ENCODE measurements at regions of chr15 and their contacts with region 1.

Region 1: GRCh38 chr15:70466895-70467529 is 296.3 kb downstream of the UACA start:
- DNase-seq: peak; percentile 76
- H3K4me3 Mint-ChIP-seq: no peak overlapping the region
- H3K27ac Mint-ChIP-seq: no peak overlapping the region
- H3K4me1 Mint-ChIP-seq: peaks cover 4% of the 10 kb centered on the region
- H3K27me3 Mint-ChIP-seq: peaks cover 98% of the 10 kb centered on the region

Region 2: GRCh38 chr15:69475769-69476358 is 991.1 kb before region 1 on chr15:
- CTCF ChIA-PET with region 1: interaction called, 28 read pairs
- DNase-seq: peak; percentile 81
- H3K4me3 Mint-ChIP-seq: no peak overlapping the region
- H3K27ac Mint-ChIP-seq: no peak overlapping the region
- H3K4me1 Mint-ChIP-seq: peaks cover 2% of the 10 kb centered on the region
- H3K27me3 Mint-ChIP-seq: peaks cover 44% of the 10 kb centered on the region

Region 3: DNA sequence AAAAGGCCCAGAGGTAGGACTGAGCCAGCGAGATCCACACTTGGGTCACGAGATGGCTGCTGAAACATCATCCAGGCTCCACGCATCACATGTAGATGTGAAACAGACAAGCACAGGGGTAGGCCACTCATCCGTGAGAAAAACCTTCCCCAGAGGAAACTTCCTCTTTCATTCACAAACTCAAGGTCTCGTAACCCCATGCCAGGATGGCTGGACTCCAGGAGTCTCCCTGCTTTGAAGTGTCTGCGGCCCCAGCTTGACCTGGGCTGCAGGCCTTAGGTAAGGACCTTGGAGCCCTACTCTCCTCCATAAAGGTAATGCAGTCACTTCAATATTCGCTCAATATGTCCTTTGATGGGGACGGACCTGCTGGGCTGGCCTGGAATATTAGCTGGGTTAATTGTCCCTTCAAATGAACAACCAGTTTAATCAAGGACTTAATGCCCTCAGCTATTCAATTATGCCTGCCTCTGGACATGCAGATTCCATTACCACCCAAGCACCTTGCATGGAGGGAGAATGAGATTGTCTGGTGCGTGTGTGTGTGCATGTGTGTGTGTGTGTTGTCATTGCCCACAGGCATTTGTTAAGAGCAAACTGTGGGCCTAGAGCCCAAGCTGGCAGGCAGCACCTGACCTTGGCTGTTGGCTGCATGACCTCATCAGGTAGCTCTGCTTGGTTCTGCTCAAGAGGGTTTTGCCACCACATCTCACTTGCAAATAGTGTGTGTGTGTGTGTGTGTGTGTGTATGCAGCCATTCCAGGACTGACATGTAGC is 182.4 kb before region 1 on chr15:
- CTCF ChIA-PET with region 1: no interaction called
- DNase-seq: no peak
- H3K4me3 Mint-ChIP-seq: no peak overlapping the region
- H3K27ac Mint-ChIP-seq: no peak overlapping the region
- H3K4me1 Mint-ChIP-seq: peaks cover 18% of the 10 kb centered on the region
- H3K27me3 Mint-ChIP-seq: peaks cover 5% of the 10 kb centered on the region

Region 4: GRCh38 chr15:70451821-70452653 is 15.0 kb before region 1 on chr15:
- CTCF ChIA-PET with region 1: interaction called, 13 read pairs
- DNase-seq: peak; percentile 80
- H3K4me3 Mint-ChIP-seq: no peak overlapping the region
- H3K27ac Mint-ChIP-seq: peak overlapping the region; percentile 70
- H3K4me1 Mint-ChIP-seq: peaks cover 66% of the 10 kb centered on the region
- H3K27me3 Mint-ChIP-seq: peaks cover 48% of the 10 kb centered on the region

Region 5: GRCh38 chr15:70488002-70488605 is 21.1 kb after region 1 on chr15:
- CTCF ChIA-PET with region 1: interaction called, 96 read pairs
- DNase-seq: peak; percentile 82
- H3K4me3 Mint-ChIP-seq: no peak overlapping the region
- H3K27ac Mint-ChIP-seq: no peak overlapping the region
- H3K4me1 Mint-ChIP-seq: peaks cover 45% of the 10 kb centered on the region
- H3K27me3 Mint-ChIP-seq: peaks cover 90% of the 10 kb centered on the region

Region 6: DNA sequence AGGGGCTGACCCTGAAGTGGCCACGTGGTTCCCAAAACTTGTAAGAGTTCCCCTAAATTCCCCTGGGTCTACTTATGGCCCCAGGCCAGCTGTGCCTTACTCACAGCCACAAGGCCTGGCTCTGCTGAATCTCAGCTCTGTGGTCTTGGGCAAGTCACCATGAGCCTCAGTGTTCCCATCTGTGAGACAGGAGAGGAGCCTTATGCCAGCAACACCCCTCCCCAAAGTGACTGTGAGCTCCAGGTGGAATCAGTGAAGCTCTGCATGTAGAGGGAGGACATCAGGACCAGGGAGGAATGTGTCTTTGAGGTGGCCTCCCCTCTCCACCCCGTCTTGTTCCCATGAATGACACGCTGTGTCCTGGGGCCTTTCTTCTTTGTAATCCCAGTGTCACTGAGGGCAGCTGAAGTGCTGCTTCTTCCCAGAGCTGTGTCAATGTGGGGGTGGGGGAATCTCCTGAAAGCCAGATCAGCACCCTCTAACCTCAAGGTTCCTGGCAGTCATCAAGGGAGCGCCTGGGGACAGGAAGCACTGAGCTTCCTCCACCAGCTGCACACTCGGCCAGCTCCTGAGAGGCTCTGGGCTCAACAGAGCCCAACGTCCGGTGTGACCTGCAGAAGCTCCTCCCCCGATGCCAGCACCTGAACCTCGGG is 37.4 kb after region 1 on chr15:
- CTCF ChIA-PET with region 1: interaction called, 28 read pairs
- DNase-seq: peak; percentile 43
- H3K4me3 Mint-ChIP-seq: no peak overlapping the region
- H3K27ac Mint-ChIP-seq: no peak overlapping the region
- H3K4me1 Mint-ChIP-seq: peaks cover 65% of the 10 kb centered on the region
- H3K27me3 Mint-ChIP-seq: peaks cover 68% of the 10 kb centered on the region

Region 7: DNA sequence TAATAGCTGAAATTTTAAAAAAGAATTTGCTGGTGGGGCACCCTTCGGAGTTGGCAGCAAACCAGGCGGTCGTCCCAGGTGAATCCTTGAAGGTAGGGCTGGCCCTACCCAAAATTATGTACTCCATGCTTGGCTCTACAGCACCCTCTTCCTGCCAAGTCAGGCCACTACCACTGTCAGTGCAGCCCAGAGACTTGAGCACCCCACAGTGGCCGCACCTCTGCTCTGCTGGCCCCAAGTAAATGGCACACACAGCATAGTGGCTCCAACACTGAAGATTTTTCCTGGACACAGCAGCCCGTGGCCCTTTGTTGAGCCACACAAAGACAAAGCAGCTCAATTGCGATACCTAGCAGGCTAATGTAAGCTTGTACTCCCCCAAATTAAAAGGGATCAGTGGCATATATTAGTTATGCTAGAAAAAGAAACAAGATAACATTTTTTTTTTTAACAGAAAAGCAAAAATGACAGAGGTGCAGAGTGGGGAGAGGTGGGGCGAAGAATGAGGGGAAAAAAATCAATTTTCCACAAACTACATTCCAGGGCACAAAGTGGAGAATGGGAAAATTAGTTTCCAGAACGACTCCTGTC is 45.9 kb after region 1 on chr15:
- CTCF ChIA-PET with region 1: interaction called, 33 read pairs
- DNase-seq: peak; percentile 80
- H3K4me3 Mint-ChIP-seq: no peak overlapping the region
- H3K27ac Mint-ChIP-seq: no peak overlapping the region
- H3K4me1 Mint-ChIP-seq: peaks cover 23% of the 10 kb centered on the region
- H3K27me3 Mint-ChIP-seq: peaks cover 59% of the 10 kb centered on the region

Region 8: GRCh38 chr15:70627734-70628548 is 160.9 kb after region 1 on chr15:
- CTCF ChIA-PET with region 1: no interaction called
- DNase-seq: no peak
- H3K4me3 Mint-ChIP-seq: no peak overlapping the region
- H3K27ac Mint-ChIP-seq: no peak overlapping the region
- H3K4me1 Mint-ChIP-seq: peaks cover 7% of the 10 kb centered on the region
- H3K27me3 Mint-ChIP-seq: peaks cover 45% of the 10 kb centered on the region